Activated CD4-positive, alpha-beta memory T cell treated with anti-CD3 and anti-CD28 coated beads for 36 hours (primary cell): ENCODE measurements at regions of chr17 and their contacts with region 1.

Region 1: DNA sequence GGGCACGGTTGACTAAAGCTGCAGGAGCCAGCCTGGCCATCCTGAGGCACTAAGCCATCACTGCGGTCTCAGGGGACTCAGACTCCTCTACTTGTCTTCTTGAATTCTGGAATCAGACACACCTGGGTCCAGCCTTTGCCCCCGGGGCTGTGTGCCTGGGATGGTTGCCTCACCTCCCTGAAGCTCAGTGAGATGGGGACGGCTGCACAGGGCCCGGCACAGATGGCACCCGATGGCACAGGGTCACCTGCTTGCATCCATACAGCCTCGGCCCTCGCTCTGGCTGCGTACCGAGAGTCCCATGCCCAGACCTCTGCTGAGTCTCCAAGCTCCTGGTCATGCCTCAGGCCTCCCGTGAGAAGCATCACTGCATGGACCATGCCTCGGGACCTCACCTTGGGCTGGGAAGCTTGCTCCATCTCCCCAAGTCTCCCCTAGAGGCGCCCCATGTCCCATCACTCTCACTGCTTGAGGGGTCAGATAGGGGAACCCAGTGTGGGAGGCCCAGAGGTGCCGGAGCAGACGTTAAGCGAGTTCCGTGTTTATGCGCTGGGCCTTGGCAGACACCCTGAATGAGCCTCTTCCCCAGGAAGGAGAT is 316.3 kb downstream of the SEC14L1 start:
- DNase-seq: peak; percentile 65
- H3K4me3 Mint-ChIP-seq: peak overlapping the region; percentile 91
- H3K27ac Mint-ChIP-seq: peak overlapping the region; percentile 100
- H3K4me1 Mint-ChIP-seq: peaks cover 51% of the 10 kb centered on the region
- H3K27me3 Mint-ChIP-seq: no peaks in the 10 kb centered on the region

Region 2: GRCh38 chr17:77471984-77472461 is 15.0 kb after region 1 on chr17:
- CTCF ChIA-PET with region 1: interaction called, 14 read pairs
- POLR2A ChIA-PET with region 1: interaction called, 114 read pairs
- intact Hi-C with region 1: loop called (anchors 1 kb)
- DNase-seq: peak; percentile 32
- H3K4me3 Mint-ChIP-seq: peak overlapping the region; percentile 62
- H3K27ac Mint-ChIP-seq: peak overlapping the region; percentile 86
- H3K4me1 Mint-ChIP-seq: peaks cover 97% of the 10 kb centered on the region
- H3K27me3 Mint-ChIP-seq: no peaks in the 10 kb centered on the region